Activated CD8-positive, alpha-beta T cell treated with anti-CD3 and anti-CD28 coated beads, Interleukin-2, amount 10 ng/mL, durations not matched to agents 7 days and 5 days (primary cell): ENCODE measurements at regions of chr6 and their contacts with region 1.

Region 1: GRCh38 chr6:107847844-107848802 is 24.0 kb upstream of the SCML4 start:
- DNase-seq: peak; percentile 85
- ATAC-seq: peak; percentile 94
- H3K4me3 Mint-ChIP-seq: peak overlapping the region; percentile 71
- H3K27ac Mint-ChIP-seq: peak overlapping the region; percentile 65
- H3K4me1 Mint-ChIP-seq: peaks cover 29% of the 10 kb centered on the region
- H3K27me3 Mint-ChIP-seq: no peaks in the 10 kb centered on the region

Region 2: DNA sequence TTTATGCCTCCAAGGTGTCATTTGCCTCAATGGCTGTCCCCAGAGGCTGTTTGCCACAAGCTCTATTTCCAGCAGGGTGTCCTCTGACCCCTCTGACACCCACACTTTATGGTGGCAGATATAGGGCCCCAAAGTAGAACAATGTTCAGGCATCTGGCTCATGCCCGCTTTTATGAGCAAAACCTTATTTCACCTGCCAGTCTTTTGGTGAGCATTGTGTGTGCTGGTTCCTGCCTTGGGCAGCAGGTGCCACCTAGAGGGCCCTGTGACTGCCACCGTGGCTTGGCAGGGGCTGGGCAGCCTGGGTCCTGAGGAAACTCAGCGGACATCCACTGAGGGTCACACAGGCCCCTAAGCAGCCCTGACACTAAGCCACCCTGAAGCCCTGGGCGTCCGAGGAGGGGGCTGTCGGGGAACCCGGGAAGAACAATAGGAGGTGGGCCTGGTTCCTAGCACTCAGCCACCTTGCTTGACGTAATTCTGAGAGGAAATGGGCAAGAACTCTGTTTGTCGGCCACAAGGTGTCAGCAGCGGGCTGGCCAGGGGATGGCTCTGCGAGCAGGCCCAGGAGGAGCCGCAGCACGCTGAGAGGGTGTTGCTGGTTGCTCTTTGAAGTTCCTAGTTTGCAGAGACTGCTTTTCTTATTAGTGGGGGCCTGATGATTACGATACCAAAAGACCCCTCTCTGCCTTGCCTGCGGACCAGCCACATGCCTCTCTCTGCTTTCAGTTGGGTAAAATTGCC is 173.0 kb before region 1 on chr6:
- CTCF ChIA-PET with region 1: interaction called, 42 read pairs
- POLR2A ChIA-PET with region 1: no interaction called
- DNase-seq: peak; percentile 93
- ATAC-seq: peak; percentile 99
- H3K4me3 Mint-ChIP-seq: peak overlapping the region; percentile 71
- H3K27ac Mint-ChIP-seq: peak overlapping the region; percentile 95
- H3K4me1 Mint-ChIP-seq: peaks cover 31% of the 10 kb centered on the region
- H3K27me3 Mint-ChIP-seq: peaks cover 2% of the 10 kb centered on the region

Region 3: GRCh38 chr6:107704347-107705013 is 143.6 kb before region 1 on chr6:
- CTCF ChIA-PET with region 1: interaction called, 26 read pairs
- POLR2A ChIA-PET with region 1: no interaction called
- DNase-seq: peak; percentile 56
- ATAC-seq: no peak
- H3K4me3 Mint-ChIP-seq: no peak overlapping the region
- H3K27ac Mint-ChIP-seq: no peak overlapping the region
- H3K4me1 Mint-ChIP-seq: peaks cover 19% of the 10 kb centered on the region
- H3K27me3 Mint-ChIP-seq: no peaks in the 10 kb centered on the region

Region 4: DNA sequence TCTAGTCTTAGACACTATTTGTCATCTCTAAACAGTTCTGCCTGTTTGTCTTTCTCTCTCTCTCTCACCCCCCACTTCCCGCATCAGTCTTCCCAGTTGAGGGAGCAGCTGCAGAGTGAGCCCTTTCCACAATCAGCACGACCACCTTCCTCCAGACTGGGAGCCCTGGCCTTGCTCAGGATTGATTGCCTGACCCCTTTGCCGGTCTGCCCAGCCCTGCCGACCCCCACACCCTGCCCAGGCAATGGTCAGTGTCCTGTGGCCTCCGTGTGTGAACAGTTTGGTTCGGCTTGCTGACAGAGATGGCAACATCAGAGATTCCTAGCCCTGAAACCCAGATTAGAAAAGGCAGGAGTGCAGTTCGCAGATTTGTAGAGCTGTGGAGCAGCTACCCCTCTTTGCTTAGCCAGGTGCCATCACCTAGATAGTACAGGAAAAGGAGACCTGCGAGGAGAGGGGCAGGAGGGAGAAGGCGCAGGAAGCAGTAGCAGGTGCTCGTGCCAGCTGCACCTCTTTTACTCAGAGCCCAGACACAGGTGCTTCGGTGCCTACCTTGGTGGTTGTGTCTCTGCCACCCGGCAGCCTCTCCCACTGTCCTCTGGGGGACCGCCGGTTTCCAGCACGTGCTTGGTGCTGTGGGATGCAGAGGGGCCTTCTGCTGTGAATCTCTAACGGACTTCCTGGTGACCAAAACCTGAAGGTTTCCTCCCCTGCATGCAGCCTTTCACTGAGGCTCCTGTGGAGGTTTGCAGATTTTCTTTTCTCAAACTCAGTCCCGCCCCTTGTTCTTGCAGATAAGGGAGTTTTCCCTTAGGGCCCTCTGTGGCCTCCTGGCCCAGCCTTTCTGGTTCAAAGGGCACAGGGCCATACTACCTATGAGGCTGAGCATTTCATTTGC is 116.5 kb before region 1 on chr6:
- CTCF ChIA-PET with region 1: interaction called, 115 read pairs
- POLR2A ChIA-PET with region 1: no interaction called
- DNase-seq: peak; percentile 56
- ATAC-seq: peak; percentile 37
- H3K4me3 Mint-ChIP-seq: peak overlapping the region; percentile 90
- H3K27ac Mint-ChIP-seq: peak overlapping the region; percentile 92
- H3K4me1 Mint-ChIP-seq: peaks cover 83% of the 10 kb centered on the region
- H3K27me3 Mint-ChIP-seq: no peaks in the 10 kb centered on the region

Region 5: GRCh38 chr6:107786709-107787588 is 61.2 kb before region 1 on chr6:
- CTCF ChIA-PET with region 1: interaction called, 46 read pairs
- POLR2A ChIA-PET with region 1: interaction called, 4 read pairs
- DNase-seq: peak; percentile 70
- ATAC-seq: peak; percentile 81
- H3K4me3 Mint-ChIP-seq: peak overlapping the region; percentile 69
- H3K27ac Mint-ChIP-seq: peak overlapping the region; percentile 91
- H3K4me1 Mint-ChIP-seq: peaks cover 67% of the 10 kb centered on the region
- H3K27me3 Mint-ChIP-seq: no peaks in the 10 kb centered on the region

Region 6: GRCh38 chr6:107820338-107821261 is 27.5 kb before region 1 on chr6:
- CTCF ChIA-PET with region 1: interaction called, 142 read pairs
- POLR2A ChIA-PET with region 1: interaction called, 29 read pairs
- DNase-seq: peak; percentile 60
- ATAC-seq: peak; percentile 8
- H3K4me3 Mint-ChIP-seq: peak overlapping the region; percentile 92
- H3K27ac Mint-ChIP-seq: peak overlapping the region; percentile 99
- H3K4me1 Mint-ChIP-seq: peaks cover 76% of the 10 kb centered on the region
- H3K27me3 Mint-ChIP-seq: no peaks in the 10 kb centered on the region

Region 7: DNA sequence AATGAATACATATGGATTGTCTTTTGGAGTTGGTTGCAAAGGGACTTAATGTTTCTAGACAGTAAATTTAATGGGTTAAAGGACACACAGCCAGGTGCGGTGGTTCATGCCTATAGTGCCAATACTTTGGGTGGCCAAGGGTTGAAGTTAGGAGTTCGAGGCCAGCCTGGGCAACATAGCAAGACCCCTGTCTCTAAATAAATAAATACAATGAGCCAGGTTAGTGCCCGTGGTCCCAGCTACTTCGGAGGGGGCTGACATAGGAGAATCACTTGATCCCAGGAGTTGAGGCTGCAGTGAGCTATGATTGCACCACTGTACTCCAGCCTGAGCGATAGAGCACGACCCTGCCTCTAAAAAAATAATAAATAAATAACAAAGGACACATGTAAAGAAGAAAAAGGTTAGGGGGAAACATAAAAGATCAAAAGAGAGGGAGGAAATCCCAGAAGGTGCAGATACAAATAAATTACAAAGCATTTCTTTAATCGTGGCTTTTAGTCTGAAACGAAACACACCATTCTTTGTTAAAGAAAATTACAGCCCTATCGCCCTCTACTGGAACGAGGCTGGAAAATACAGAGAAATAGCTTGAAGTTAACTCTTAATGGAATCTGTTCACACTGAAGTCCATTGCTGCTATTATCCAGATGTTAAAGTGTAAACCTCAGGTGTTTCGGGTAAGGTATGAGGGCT is 18.6 kb after region 1 on chr6:
- CTCF ChIA-PET with region 1: interaction called, 71 read pairs
- POLR2A ChIA-PET with region 1: no interaction called
- DNase-seq: peak; percentile 58
- ATAC-seq: peak; percentile 57
- H3K4me3 Mint-ChIP-seq: no peak overlapping the region
- H3K27ac Mint-ChIP-seq: no peak overlapping the region
- H3K4me1 Mint-ChIP-seq: peaks cover 7% of the 10 kb centered on the region
- H3K27me3 Mint-ChIP-seq: no peaks in the 10 kb centered on the region